Posterior vena cava (tissue), 2 donors: ENCODE measurements at regions of chr4 and their contacts with region 1.

Region 1: DNA sequence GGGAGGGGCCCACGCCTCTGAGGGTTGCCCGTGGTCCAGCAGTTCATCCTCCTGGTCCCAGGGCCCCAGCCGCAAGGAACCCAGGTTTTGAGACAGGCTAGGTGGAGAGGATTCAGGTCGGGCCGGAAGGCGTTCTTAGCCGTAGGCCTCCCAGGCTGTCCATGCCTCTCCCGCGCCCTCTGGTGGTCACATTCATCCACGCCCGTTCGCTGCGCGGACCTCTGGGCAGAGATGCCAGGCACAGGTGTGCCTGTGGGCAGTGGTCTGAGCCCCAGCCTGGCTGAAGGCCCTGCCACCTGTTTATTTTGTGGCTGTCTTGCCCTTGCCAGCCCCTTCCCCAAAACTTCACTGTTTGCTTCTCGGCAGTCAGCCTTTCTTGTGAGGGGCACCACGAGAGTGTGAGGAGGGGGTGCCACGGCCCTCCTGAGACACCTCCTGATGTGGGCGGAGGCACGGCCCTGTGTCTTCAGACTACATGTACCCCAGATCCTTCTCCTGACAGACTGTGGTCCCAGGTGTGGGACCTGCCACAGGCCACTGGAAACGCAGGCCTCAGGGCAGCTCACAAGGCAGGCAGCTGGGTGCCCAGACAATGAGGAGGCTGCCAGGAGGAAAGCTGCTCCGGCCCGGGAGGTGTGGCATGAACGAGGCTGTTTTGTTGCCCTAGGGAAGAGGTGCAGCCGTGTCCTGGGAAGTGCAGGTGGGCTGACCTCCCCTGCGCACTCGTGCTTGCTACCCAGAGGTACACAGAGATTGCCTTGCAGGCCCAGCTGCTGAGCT is 5.0 kb downstream of the UVSSA start:
- DNase-seq: peak; percentile 94

Region 2: GRCh38 chr4:1026115-1026514 is 325.9 kb before region 1 on chr4:
- intact Hi-C with region 1: no loop called
- DNase-seq: no peak

Region 3: DNA sequence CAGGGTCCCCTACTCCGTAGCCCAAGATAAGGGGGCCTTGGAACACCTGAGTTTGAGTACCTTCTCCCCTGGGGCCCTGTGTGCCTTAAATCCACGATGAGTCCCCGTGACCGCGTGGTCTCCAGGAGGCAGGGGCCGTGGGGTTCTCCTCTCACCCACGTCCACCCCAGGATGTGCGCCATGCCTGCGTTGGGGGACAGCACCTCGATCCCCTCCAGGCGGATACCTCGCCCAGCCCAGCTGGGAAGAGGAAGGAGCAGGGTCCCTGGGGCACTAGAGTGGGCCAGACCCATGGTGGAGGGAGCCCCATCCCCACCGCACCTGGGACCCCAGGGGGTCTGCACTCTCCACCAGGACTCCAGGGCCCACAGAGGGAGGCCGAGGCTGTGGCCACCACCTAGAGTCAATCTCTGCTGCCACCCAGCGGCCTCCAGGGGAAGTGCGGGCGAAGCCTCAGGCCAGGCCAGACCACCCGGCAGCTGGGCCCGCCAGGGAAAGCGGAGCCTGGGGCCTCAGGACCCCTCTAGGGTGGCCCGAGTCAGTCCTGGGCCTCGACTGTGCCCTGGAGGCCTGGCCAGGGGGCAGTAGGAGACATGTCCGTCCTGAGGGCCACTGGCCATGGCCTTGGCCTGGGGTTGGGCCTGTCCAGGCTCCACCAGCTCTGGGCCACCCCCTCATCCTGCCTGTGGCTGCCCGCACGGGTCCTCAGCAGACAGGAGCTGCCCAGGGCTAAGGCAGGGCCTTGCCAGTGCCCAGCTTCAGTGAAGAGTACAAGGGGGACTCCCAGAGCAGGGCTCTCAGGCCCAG is 277.1 kb after region 1 on chr4:
- intact Hi-C with region 1: loop called (anchors 5 to 10 kb)
- DNase-seq: peak; percentile 90

Region 4: GRCh38 chr4:1721004-1721665 is 369.1 kb after region 1 on chr4 and contains the starts of genes TACC3 and TMEM129:
- intact Hi-C with region 1: loop called in 1 of 2 experiments (anchors 10 kb)
- DNase-seq: peak; percentile 97
- total RNA-seq, gene TACC3: 5.2 to 9.3 TPM
- total RNA-seq, gene TMEM129: 25.1 to 28.1 TPM